ENCODE measurements at regions of chr17 and their contacts with region 1.

Region 1: GRCh38 chr17:43940630-43941029 is 1.6 kb downstream of the PPY start:
- DNase-seq: no peak

Region 2: GRCh38 chr17:43994272-43995149 is 53.9 kb after region 1 on chr17:
- intact Hi-C with region 1: loop called (anchors 2 kb)
- DNase-seq: peak; percentile 84

Region 3: GRCh38 chr17:44044067-44044466 is 103.4 kb after region 1 on chr17:
- intact Hi-C with region 1: loop called (anchors 5 kb)
- DNase-seq: no peak

Region 4: GRCh38 chr17:44159519-44160210 is 219.0 kb after region 1 on chr17:
- intact Hi-C with region 1: loop called (anchors 10 kb)
- DNase-seq: no peak